Calu3 (cell line): ENCODE measurements at regions of chrX and their contacts with region 1.

Region 1: GRCh38 chrX:134484039-134484438 is 24.1 kb downstream of the HPRT1 start:
- DNase-seq: no peak
- H3K4me3 Mint-ChIP-seq: no peak overlapping the region
- H3K27ac Mint-ChIP-seq: no peak overlapping the region
- H3K4me1 Mint-ChIP-seq: no peaks in the 10 kb centered on the region
- H3K27me3 Mint-ChIP-seq: no peaks in the 10 kb centered on the region
- CTCF ChIP-seq: peak; percentile 51

Region 2: GRCh38 chrX:134246282-134246681 is 237.8 kb before region 1 on chrX:
- CTCF ChIA-PET with region 1: no interaction called
- intact Hi-C with region 1: no loop called
- DNase-seq: no peak
- H3K4me3 Mint-ChIP-seq: no peak overlapping the region
- H3K27ac Mint-ChIP-seq: no peak overlapping the region
- H3K4me1 Mint-ChIP-seq: peaks cover 43% of the 10 kb centered on the region
- H3K27me3 Mint-ChIP-seq: no peaks in the 10 kb centered on the region
- CTCF ChIP-seq: no peak

Region 3: GRCh38 chrX:134355996-134356395 is 128.0 kb before region 1 on chrX:
- CTCF ChIA-PET with region 1: no interaction called
- intact Hi-C with region 1: no loop called
- DNase-seq: no peak
- H3K4me3 Mint-ChIP-seq: no peak overlapping the region
- H3K27ac Mint-ChIP-seq: no peak overlapping the region
- H3K4me1 Mint-ChIP-seq: no peaks in the 10 kb centered on the region
- H3K27me3 Mint-ChIP-seq: no peaks in the 10 kb centered on the region
- CTCF ChIP-seq: no peak

Region 4: GRCh38 chrX:134813697-134814096 is 329.7 kb after region 1 on chrX:
- CTCF ChIA-PET with region 1: no interaction called
- intact Hi-C with region 1: no loop called
- DNase-seq: no peak
- H3K4me3 Mint-ChIP-seq: no peak overlapping the region
- H3K27ac Mint-ChIP-seq: no peak overlapping the region
- H3K4me1 Mint-ChIP-seq: no peaks in the 10 kb centered on the region
- H3K27me3 Mint-ChIP-seq: no peaks in the 10 kb centered on the region
- CTCF ChIP-seq: no peak

Region 5: GRCh38 chrX:134990801-134991481 is 506.9 kb after region 1 on chrX and contains the start of gene SMIM10:
- CTCF ChIA-PET with region 1: no interaction called
- intact Hi-C with region 1: loop called (anchors 10 kb)
- DNase-seq: peak; percentile 75
- H3K4me3 Mint-ChIP-seq: peak within 1 kb of the TSS; percentile 76
- H3K27ac Mint-ChIP-seq: peak within 1 kb of the TSS; percentile 35
- H3K4me1 Mint-ChIP-seq: peaks cover 23% of the 10 kb centered on the region
- H3K27me3 Mint-ChIP-seq: no peaks in the 10 kb centered on the region
- CTCF ChIP-seq: no peak
- total RNA-seq, gene SMIM10: 1.8 and 2.4 TPM in 2 replicates

Region 6: GRCh38 chrX:135396109-135396508 is 912.1 kb after region 1 on chrX:
- CTCF ChIA-PET with region 1: no interaction called
- intact Hi-C with region 1: no loop called
- DNase-seq: peak; percentile 11
- H3K4me3 Mint-ChIP-seq: no peak overlapping the region
- H3K27ac Mint-ChIP-seq: no peak overlapping the region
- H3K4me1 Mint-ChIP-seq: peaks cover 8% of the 10 kb centered on the region
- H3K27me3 Mint-ChIP-seq: no peaks in the 10 kb centered on the region
- CTCF ChIP-seq: no peak